Right cardiac atrium (tissue), 5 donors: ENCODE measurements at regions of chr6 and their contacts with region 1.

Region 1: GRCh38 chr6:33771146-33772081 is 17.5 kb downstream of the LEMD2 start:
- DNase-seq: peak; percentile 77 to 91 (median 88)
- ATAC-seq: peak; percentile 78 to 85
- H3K4me3 ChIP-seq: no peak overlapping the region
- H3K27ac ChIP-seq: peak overlapping the region; percentile 3
- H3K4me1 ChIP-seq: peaks cover 3% of the 10 kb centered on the region
- H3K27me3 ChIP-seq: no peaks in the 10 kb centered on the region

Region 2: GRCh38 chr6:32627831-32628230 is 1143.6 kb before region 1 on chr6:
- intact Hi-C with region 1: no loop called
- DNase-seq: peak in 2 of 3 donors; percentile 39 to 58
- ATAC-seq: peak; percentile 52 to 61
- H3K4me3 ChIP-seq: no peak overlapping the region
- H3K27ac ChIP-seq: no peak overlapping the region
- H3K4me1 ChIP-seq: no peaks in the 10 kb centered on the region
- H3K27me3 ChIP-seq: no peaks in the 10 kb centered on the region

Region 3: GRCh38 chr6:34027445-34027936 is 256.1 kb after region 1 on chr6:
- intact Hi-C with region 1: loop called in 3 of 4 experiments (anchors 5 to 10 kb)
- DNase-seq: peak; percentile 42 to 82 (median 81)
- ATAC-seq: peak; percentile 12 to 42
- H3K4me3 ChIP-seq: no peak overlapping the region
- H3K27ac ChIP-seq: no peak overlapping the region
- H3K4me1 ChIP-seq: no peaks in the 10 kb centered on the region
- H3K27me3 ChIP-seq: no peaks in the 10 kb centered on the region

Region 4: GRCh38 chr6:34145161-34146020 is 374.0 kb after region 1 on chr6:
- intact Hi-C with region 1: loop called in 2 of 4 experiments (anchors 5 to 10 kb)
- DNase-seq: peak in 2 of 3 donors; percentile 55 to 59
- ATAC-seq: peak; percentile 33 to 42
- H3K4me3 ChIP-seq: peak overlapping the region; percentile 17
- H3K27ac ChIP-seq: no peak overlapping the region
- H3K4me1 ChIP-seq: peaks cover 4% of the 10 kb centered on the region
- H3K27me3 ChIP-seq: no peaks in the 10 kb centered on the region

Region 5: DNA sequence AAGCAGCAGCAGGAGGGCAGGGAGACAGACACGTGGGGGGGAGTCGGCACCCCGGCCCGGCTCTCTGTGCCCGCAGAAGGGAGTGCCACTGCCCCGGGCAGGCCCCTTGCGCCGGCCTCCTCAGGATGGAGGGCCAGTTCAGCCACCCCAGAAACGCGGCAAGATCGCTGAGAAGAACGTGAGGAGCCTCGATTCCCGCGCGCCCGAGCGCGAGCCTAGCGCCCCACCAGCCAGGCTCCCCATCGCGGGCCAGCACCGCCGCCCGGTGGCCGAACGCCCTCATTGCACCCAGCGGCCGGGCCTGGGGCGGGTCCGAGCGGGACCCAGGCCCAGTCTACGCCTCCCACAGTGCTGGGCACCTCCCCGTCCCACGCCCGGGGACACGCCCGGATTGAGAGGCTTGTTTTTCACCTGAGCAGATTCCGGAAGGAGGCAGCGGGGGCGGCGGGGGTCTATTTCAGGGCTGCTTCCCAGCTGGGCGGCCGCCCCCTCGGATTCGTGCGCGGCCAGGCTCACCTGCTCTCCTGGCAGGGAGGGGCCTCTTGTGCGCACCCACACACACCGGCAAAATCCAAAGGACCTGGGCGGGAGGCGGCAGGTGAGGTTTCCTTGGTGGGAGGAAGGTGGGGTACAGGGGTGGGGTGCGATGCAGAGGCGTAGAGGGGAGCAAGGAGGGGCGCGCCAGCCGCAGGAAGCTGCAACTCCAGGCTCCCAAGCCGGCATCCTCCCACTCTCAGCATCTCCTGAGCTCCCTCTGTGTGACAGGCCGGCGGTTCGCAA is 383.4 kb after region 1 on chr6:
- intact Hi-C with region 1: loop called in 3 of 4 experiments (anchors 2 to 5 kb)
- DNase-seq: peak; percentile 41 to 83 (median 81)
- ATAC-seq: peak; percentile 73 to 80
- H3K4me3 ChIP-seq: peak overlapping the region; percentile 11
- H3K27ac ChIP-seq: no peak overlapping the region
- H3K4me1 ChIP-seq: no peaks in the 10 kb centered on the region
- H3K27me3 ChIP-seq: no peaks in the 10 kb centered on the region